HAP-1 (cell line): ENCODE measurements at regions of chr3 and their contacts with region 1.

Region 1: DNA sequence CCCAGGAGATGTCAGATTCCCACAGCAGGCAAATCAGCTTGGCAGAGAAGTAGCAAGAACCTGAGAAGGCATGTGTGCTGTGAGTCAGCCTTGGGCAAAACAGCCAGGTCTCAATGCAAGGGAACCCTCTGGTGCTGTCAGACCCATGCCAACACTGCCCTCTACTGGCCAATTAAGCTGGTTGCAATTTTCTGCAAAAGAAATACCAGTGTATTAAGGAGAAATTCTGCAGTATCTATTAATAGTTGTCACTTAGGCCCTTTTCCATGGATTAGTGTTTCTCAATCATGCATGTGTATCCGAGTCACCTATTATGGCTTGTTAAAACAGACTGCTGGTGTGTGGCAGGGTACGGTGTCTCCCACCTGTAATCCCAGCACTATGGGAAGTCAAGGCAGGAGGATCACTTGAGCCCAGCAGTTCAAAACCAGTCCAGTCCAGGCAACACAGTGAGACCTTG is 26.2 kb downstream of the MAP4 start:
- DNase-seq: peak; percentile 81 to 82
- H3K4me3 ChIP-seq: no peak overlapping the region
- H3K4me1 ChIP-seq: peaks cover 23% of the 10 kb centered on the region
- H3K27me3 ChIP-seq: no peaks in the 10 kb centered on the region

Region 2: DNA sequence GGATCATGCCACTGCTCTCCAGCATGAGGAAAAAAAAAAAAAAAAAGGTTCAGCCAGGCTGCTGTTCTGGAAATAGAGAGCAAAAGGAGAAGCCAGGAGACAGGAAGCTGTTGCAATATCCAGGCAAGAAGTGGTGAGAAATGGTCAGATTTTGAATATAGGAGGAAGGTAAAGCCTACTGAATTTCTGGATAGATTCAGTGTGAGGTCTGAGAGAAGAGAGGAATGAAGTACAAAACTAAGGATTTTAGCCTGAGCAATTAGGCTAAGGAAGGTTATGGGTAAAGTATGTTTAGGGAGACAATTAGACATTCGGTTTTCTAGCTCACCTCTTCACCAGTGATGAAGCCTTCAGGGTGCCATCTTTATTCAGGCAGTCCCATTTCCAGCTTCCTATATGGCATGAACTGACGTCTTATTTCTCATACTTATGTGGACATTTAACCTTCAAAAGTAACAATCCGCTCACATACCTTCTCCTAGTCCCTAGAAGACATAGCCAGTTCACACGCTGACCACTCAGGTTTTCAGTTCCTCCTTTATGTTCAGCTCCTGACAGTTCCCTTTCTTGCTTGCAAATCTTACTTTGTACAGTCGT is 764.6 kb before region 1 on chr3:
- in situ Hi-C with region 1: no loop called
- DNase-seq: no peak
- H3K4me3 ChIP-seq: no peak overlapping the region
- H3K4me1 ChIP-seq: peaks cover 3% of the 10 kb centered on the region
- H3K27me3 ChIP-seq: no peaks in the 10 kb centered on the region

Region 3: DNA sequence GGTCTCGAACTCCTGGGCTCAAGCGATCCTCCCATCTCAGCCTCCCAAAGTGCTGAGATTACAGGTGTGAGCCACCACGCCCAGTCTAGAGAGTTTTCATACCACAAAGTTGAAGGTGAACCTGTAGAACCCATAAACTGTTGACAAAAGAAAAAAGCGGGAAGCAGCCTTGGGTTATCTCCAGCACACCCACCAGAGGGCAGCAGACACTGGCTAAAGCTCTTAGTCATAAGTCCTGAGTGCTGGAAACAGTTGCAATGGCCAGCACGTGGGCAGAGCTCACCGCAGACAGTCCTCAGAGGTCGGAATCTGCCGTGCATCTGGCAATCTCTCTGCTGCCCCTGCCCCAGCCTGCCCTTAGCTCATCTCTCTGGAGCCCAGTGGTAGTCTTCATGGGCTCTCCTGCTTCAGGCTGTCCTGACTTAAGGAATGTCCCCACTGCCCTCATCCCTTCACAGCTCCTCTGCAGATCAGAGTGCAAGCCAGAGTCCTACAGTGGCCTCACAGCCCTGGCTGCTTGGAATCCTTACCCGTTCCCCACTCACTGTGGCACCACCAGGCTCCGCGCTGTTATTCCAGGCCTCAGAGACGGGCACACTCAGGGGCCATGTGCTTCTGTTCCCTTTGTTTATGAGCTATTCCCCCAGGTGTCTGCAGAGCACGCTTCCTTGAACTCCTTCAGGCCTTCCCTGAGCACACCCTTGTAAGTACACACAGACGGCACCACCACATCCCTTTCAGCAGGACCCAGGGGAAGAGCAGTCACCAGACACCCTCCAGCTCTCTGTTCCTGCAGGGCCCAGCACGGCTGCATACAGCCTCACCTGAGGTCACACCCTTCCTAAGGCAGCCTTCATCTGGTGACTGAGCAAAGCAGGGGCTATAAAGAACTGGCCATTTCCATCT is 467.7 kb before region 1 on chr3:
- in situ Hi-C with region 1: no loop called
- DNase-seq: peak; percentile 92
- H3K4me3 ChIP-seq: no peak overlapping the region
- H3K4me1 ChIP-seq: peaks cover 17% of the 10 kb centered on the region
- H3K27me3 ChIP-seq: no peaks in the 10 kb centered on the region

Region 4: GRCh38 chr3:47849699-47850563 is 140.1 kb before region 1 on chr3:
- in situ Hi-C with region 1: loop called (anchors 10 kb)
- DNase-seq: peak in 1 of 2 experiments; percentile 40
- H3K4me3 ChIP-seq: no peak overlapping the region
- H3K4me1 ChIP-seq: no peaks in the 10 kb centered on the region
- H3K27me3 ChIP-seq: no peaks in the 10 kb centered on the region

Region 5: GRCh38 chr3:48023377-48023776 is 33.4 kb after region 1 on chr3:
- in situ Hi-C with region 1: no loop called
- DNase-seq: no peak
- H3K4me3 ChIP-seq: no peak overlapping the region
- H3K4me1 ChIP-seq: peaks cover 22% of the 10 kb centered on the region
- H3K27me3 ChIP-seq: no peaks in the 10 kb centered on the region

Region 6: GRCh38 chr3:48077815-48078214 is 87.8 kb after region 1 on chr3:
- in situ Hi-C with region 1: no loop called
- DNase-seq: no peak
- H3K4me3 ChIP-seq: no peak overlapping the region
- H3K4me1 ChIP-seq: peaks cover 5% of the 10 kb centered on the region
- H3K27me3 ChIP-seq: no peaks in the 10 kb centered on the region